ENCODE measurements at regions of chr19 and their contacts with region 1.

Region 1: DNA sequence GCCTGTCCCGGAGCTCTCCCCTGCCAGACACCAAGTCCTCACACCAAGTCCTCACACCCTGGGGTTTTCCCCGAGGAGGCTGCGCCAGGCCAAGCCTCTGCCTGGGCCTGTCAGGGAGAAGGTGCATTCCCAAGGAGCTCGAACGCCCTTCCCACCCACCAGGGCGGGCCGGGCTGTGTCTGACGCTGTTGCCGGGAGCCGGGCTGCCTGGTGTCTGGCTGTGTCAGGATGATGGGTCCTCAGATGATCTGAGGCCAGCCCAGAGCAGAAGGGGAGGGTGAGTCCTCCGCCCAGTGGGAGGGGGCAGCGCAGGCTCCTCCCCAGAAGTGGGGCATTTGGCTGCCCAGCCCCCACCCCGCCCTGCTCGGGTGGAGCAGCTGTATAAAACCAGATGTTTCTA is 2.3 kb upstream of the HAS1 start:
- DNase-seq: peak; percentile 44 to 86 (median 79)
- ATAC-seq: peak; percentile 76 to 80
- H3K4me3 ChIP-seq: no peak overlapping the region
- H3K27ac ChIP-seq: no peak overlapping the region
- H3K4me1 ChIP-seq: no peaks in the 10 kb centered on the region
- H3K27me3 ChIP-seq: no peaks in the 10 kb centered on the region

Region 2: GRCh38 chr19:51777570-51778462 is 51.8 kb after region 1 on chr19:
- intact Hi-C with region 1: loop called in 1 of 4 experiments (anchors 10 kb)
- DNase-seq: peak; percentile 71 to 89 (median 85)
- ATAC-seq: peak; percentile 94 to 96
- H3K4me3 ChIP-seq: no peak overlapping the region
- H3K27ac ChIP-seq: no peak overlapping the region
- H3K4me1 ChIP-seq: peaks cover 3% of the 10 kb centered on the region
- H3K27me3 ChIP-seq: no peaks in the 10 kb centered on the region

Region 3: DNA sequence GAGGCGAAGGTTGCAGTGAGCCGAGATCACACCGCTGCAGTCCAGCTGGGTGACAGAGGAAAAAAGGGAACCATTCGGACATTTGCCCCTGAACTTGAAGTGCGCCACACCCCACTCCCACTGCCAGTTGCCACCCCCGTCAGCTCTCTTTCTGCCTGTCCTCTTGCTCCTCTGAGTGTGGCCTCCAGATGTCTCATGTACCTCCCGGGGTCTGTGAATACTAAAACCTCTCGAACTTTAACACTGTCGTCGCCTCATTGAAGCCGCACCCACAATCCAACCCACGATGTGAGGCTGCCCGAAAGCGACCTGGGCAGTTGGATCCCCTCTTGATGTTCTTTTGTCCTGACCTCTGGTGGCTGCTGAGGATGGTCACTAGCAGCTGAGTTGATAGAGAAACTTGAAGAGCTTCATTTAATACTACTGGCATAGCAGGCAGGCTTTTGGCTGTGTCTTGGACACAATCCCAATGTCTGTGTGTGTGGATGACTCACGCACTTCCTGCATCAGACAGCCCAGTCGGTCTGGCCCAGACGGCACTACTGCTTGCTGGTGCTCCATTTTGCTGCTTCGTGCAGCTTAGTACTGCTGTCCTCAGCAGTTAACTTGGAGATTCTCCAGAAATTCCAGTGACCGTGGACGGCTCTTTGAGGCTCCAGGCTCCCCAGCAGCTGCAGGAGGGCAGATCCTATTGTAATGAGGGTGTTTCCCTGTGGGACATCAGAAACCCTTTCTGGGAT is 73.2 kb after region 1 on chr19:
- intact Hi-C with region 1: no loop called
- DNase-seq: peak; percentile 92 to 95 (median 94)
- ATAC-seq: peak; percentile 96 to 97
- H3K4me3 ChIP-seq: no peak overlapping the region
- H3K27ac ChIP-seq: peak overlapping the region; percentile 97
- H3K4me1 ChIP-seq: peaks cover 6% of the 10 kb centered on the region
- H3K27me3 ChIP-seq: no peaks in the 10 kb centered on the region